ENCODE measurements at regions of chr17 and their contacts with region 1.

Region 1: DNA sequence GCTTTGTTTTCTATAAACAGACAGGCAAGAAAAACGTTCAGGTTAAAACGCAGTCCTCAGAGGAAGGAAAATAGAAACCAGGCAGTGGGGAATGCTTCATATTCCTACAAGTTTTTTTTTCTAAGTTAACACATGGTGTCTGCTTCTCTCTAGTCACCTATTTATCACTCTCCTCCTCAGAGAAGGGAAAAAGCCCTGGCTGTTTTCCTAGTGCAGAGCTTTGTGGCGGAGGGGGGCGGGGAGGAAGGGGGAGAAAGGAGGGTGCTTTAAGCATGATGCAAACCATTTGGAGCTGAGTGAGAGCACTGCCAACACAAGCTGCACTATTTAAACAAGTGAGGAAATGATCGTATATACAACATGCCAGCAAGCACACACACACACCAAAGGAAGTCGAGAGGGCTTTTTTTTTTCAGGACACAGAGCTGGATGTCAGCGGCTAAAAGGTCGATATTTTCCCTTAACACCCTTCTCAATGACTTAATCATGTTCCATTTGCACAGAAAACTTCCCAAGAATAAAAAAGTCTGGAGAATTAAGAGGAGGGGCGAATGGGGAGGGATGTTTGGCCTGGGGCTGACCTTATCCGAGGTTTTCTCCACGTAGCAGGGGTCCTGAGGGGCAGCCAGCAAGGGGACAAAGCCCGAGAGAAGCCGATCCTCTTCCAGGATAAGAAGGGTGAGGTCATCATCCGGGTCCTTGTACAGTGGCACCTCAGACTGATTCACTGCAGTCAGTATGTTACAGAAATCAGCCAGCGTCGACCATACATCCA is 117.4 kb downstream of the HIC1 start:
- DNase-seq: peak; percentile 72 to 91
- ATAC-seq: peak; percentile 64 to 83 (median 80)
- H3K4me3 ChIP-seq: peak overlapping the region in 8 of 10 donors; percentile 10 to 38 (median 21)
- H3K27ac ChIP-seq: peak overlapping the region; percentile 52 to 96 (median 88)
- H3K4me1 ChIP-seq: peaks cover 41 to 82% (median 64%) of the 10 kb centered on the region in 9 donors
- H3K27me3 ChIP-seq: no peaks in the 10 kb centered on the region
- CTCF ChIP-seq: no peak

Region 2: DNA sequence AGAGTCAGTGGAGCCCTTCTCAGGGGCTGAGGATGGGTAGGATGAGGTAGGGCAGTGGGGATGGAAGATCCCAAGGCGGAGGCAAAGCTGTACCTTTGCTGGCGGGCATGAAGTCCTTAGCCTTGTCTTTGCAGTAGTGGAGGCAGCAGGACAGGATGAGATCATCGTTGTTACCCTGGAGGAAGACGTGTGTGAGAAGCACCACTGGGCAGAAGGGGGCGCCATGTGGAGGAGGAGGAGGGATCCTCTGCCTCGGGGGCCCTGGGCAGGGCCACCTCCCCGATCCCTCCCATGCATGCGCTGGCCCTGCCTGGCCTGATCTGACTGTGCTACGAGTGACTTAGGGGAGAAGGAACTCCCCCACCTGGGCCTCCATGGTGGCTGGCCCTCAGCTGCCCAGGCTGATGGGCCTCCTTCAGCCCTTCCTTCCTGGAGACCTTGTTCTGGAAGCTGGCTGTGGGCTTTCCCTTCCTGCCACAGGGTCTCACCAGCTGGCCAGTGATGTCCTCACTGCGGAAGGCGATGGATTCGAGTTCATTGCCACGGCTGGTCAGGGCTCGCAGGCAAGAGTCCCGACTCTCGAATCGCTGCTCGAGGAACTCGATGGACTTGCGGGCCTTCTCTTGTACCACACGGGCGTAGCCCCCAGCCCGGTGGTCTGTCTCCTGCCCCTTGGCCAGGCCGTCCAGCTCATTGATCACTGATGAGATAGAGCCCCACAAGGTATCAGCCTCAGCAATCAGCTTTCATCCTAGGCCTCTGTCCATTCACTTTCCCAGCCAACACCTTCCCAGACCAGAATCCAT is 107.1 kb before region 1 on chr17:
- intact Hi-C with region 1: loop called in 4 of 10 experiments (anchors 5 to 10 kb)
- DNase-seq: peak in 1 of 2 donors; percentile 71
- ATAC-seq: peak in 6 of 8 donors; percentile 6 to 14 (median 8)
- H3K4me3 ChIP-seq: no peak overlapping the region
- H3K27ac ChIP-seq: peak overlapping the region; percentile 54 to 97 (median 93)
- H3K4me1 ChIP-seq: peaks cover 35 to 98% (median 87%) of the 10 kb centered on the region in 9 donors
- H3K27me3 ChIP-seq: no peaks in the 10 kb centered on the region
- CTCF ChIP-seq: peak in 6 of 9 donors; percentile 33 to 59 (median 48)

Region 3: DNA sequence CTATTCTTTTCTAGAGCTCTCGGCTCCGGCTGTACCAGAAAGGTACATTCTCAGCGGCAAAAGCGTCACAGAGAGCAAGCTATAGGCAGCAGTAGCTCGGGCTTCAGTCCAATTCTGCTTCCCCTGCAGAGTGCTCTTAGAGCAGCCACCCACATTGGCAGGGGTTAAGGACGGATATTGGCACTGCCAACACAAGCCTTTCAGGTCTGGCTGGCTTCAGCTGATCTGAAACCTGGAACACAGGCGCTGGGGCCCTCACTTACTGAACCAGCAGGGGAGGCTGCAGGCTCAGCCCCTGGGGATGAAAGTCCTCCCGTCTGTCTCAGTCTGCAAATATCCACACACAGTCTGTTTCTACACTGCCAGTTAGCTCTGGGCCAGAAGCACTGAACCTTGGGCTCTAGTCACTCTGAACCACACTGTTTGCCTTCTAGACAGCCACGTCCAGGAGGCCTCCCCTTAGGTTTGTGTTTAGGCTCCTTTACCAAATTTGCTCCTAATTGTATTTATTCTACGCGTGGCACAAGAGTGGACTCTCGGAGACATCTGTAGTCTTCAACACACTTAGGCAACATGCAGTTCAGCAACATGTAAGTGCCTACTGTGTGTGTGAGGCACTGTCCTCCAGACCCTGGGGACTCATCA is 77.3 kb before region 1 on chr17:
- intact Hi-C with region 1: loop called in 1 of 10 experiments (anchors 5 kb)
- DNase-seq: peak; percentile 70 to 73
- ATAC-seq: peak; percentile 80 to 93 (median 88)
- H3K4me3 ChIP-seq: no peak overlapping the region
- H3K27ac ChIP-seq: peak overlapping the region in 9 of 10 donors; percentile 17 to 65 (median 37)
- H3K4me1 ChIP-seq: peaks cover 5 to 51% (median 26%) of the 10 kb centered on the region in 9 donors
- H3K27me3 ChIP-seq: no peaks in the 10 kb centered on the region
- CTCF ChIP-seq: peak; percentile 43 to 83 (median 75)

Region 4: DNA sequence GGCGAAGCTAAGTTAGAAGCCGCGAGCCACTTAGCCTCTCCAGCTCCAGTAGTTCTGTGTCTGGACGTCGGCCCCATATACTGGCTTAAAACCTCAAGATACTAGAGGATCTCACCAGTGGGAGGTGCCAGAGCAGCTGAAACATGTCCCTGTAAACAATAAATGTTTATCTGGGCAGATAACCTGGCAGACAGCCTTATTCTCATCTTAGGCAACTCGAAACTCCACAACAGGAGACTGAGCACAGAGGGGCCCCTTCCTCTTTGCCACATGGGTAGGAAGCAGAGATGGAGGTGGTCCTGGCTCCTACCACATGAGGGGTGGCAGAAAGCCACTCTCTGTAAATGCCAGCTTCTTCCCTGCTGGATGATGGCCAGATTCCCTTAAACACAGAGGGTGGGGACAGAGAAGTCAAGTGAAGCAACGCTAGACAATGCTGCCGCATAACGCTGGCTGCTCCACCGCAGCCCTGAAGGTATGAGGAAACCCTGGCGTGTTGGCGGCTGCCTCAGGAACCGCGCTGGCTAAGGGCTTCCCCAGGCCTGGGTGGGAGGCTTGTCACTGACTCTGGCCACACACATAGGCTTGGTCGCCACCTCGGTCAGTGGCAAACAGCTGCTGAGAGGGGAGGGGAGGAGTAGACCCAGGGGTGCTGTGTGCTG is 49.5 kb before region 1 on chr17:
- intact Hi-C with region 1: loop called in 5 of 10 experiments (anchors 5 to 10 kb)
- DNase-seq: peak; percentile 54 to 63
- ATAC-seq: peak; percentile 66 to 91 (median 78)
- H3K4me3 ChIP-seq: peak overlapping the region in 6 of 10 donors; percentile 5 to 23 (median 11)
- H3K27ac ChIP-seq: peak overlapping the region; percentile 28 to 89 (median 80)
- H3K4me1 ChIP-seq: peaks cover 12 to 48% (median 32%) of the 10 kb centered on the region in 9 donors
- H3K27me3 ChIP-seq: no peaks in the 10 kb centered on the region
- CTCF ChIP-seq: peak in 6 of 9 donors; percentile 5 to 33 (median 27)

Region 5: DNA sequence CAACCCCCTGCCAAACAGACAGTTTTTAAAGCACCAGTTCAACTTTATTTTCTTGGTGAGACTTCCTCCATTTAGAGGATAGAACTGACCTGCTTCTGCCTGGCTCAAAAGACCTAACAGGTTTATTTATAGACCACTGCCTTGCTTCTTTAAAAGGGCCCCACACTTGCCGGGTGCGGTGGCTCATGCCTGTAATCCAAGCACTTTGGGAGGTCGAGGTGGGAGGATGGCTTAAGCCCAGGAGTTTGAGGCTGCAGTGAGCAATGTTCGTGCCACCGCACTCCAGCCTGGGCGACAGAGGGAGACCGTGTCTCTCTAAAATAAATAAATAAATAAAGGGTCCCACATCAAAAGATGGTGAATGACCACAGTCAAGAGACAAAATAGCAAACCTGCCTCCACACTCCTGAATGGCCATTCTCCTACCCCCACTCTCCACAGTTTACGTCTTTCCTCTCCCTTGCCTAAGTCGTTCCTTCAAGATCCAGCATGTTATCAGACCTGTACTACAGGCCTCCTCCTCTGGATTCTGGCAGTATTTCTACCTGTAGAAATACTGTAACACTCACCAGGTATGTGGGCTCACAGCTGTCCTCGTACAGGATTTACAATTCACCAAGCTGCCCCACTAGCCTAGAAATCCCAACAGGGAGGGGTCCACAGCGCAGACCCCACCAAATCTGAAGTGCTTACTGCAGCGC is 35.7 kb after region 1 on chr17:
- intact Hi-C with region 1: loop called in 2 of 10 experiments (anchors 5 kb)
- DNase-seq: no peak
- ATAC-seq: peak in 4 of 8 donors; percentile 48 to 63 (median 60)
- H3K4me3 ChIP-seq: no peak overlapping the region
- H3K27ac ChIP-seq: peak overlapping the region in 7 of 10 donors; percentile 19 to 67 (median 59)
- H3K4me1 ChIP-seq: peaks cover 4 to 60% (median 38%) of the 10 kb centered on the region in 9 donors
- H3K27me3 ChIP-seq: no peaks in the 10 kb centered on the region
- CTCF ChIP-seq: no peak

Region 6: GRCh38 chr17:2233441-2233947 is 61.2 kb after region 1 on chr17:
- intact Hi-C with region 1: loop called in 4 of 10 experiments (anchors 2 to 5 kb)
- DNase-seq: peak; percentile 22 to 33
- ATAC-seq: peak in 5 of 8 donors; percentile 27 to 63 (median 35)
- H3K4me3 ChIP-seq: no peak overlapping the region
- H3K27ac ChIP-seq: peak overlapping the region in 9 of 10 donors; percentile 34 to 86 (median 70)
- H3K4me1 ChIP-seq: peaks cover 13 to 89% (median 68%) of the 10 kb centered on the region in 9 donors
- H3K27me3 ChIP-seq: no peaks in the 10 kb centered on the region
- CTCF ChIP-seq: no peak

Region 7: GRCh38 chr17:2700516-2701141 is 528.4 kb after region 1 on chr17:
- intact Hi-C with region 1: no loop called
- DNase-seq: no peak
- ATAC-seq: no peak
- H3K4me3 ChIP-seq: no peak overlapping the region
- H3K27ac ChIP-seq: no peak overlapping the region
- H3K4me1 ChIP-seq: peaks cover 0 to 21% (median 15%) of the 10 kb centered on the region in 9 donors
- H3K27me3 ChIP-seq: no peaks in the 10 kb centered on the region
- CTCF ChIP-seq: no peak